PC-9 (cell line): ENCODE measurements at regions of chr18 and their contacts with region 1.

Region 1: GRCh38 chr18:67600181-67601172 is 84.0 kb upstream of the DSEL start:
- DNase-seq: peak in 1 of 2 experiments; percentile 23
- H3K4me3 ChIP-seq: no peak overlapping the region
- H3K27ac ChIP-seq: no peak overlapping the region
- H3K4me1 ChIP-seq: 0 out of 2 replicates have a peak, but pooled peaks cover 3% of the 10 kb centered on the region
- H3K27me3 ChIP-seq: no peaks in the 10 kb centered on the region
- CTCF ChIP-seq: no peak

Region 2: DNA sequence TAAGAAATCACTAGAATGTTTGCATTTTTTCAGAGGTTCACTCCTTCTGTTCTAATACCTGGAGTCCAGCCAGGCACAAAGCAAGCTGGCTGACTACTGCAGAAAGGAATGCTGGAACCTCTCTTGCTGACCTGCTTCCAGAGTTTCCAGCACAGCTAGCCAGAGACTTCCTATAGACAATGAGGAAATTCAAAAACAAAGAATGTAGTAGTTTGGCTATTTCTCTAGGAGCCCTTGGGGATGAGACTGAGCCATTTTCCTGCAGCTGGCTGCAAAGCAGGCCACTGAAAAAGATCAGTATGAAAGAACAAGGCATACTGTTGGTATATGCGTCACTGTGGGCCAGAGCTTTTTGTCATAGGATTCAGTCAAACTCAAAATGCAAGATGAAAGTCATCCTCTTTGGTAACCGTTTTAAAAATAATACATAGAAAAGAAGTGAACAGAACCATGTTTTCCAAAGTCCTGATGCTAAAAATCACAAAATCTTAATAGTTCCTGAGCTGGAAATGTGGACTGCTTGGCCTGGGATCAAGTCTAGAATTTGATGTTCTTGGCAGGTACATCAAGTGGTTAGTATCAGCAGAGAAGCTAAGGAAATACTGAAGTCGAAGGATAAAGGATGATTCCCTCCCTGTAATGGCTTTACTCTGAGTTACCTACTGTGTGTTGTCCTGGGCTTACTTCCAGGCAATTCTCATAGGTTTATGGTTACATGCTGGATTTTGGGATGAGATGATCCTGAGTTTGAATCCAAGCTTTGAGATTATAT is 75.0 kb before region 1 on chr18:
- CTCF ChIA-PET with region 1: no interaction called
- POLR2A ChIA-PET with region 1: no interaction called
- intact Hi-C with region 1: loop called (anchors 10 kb)
- DNase-seq: peak; percentile 66 to 90
- H3K4me3 ChIP-seq: no peak overlapping the region
- H3K27ac ChIP-seq: no peak overlapping the region
- H3K4me1 ChIP-seq: peaks cover 8% of the 10 kb centered on the region; the same call in 1 of the 2 replicates
- H3K27me3 ChIP-seq: no peaks in the 10 kb centered on the region
- CTCF ChIP-seq: no peak